Breast epithelium (tissue), 4 donors: ENCODE measurements at regions of chr1 and their contacts with region 1.

Region 1: GRCh38 chr1:201538612-201539551 is at the start of gene NAV1:
- DNase-seq: peak; percentile 43 to 62
- H3K4me3 ChIP-seq: peak within 1 kb of the TSS; percentile 73 to 97 (median 76)
- H3K27ac ChIP-seq: peak within 1 kb of the TSS; percentile 83 to 94
- H3K4me1 ChIP-seq: peaks cover 5 to 18% of the 10 kb centered on the region in 2 donors
- H3K27me3 ChIP-seq: no peaks in the 10 kb centered on the region
- CTCF ChIP-seq: no peak
- POLR2A ChIP-seq: no peak
- total RNA-seq, gene NAV1: 11.3 to 31.5 (median 22.7) TPM

Region 2: DNA sequence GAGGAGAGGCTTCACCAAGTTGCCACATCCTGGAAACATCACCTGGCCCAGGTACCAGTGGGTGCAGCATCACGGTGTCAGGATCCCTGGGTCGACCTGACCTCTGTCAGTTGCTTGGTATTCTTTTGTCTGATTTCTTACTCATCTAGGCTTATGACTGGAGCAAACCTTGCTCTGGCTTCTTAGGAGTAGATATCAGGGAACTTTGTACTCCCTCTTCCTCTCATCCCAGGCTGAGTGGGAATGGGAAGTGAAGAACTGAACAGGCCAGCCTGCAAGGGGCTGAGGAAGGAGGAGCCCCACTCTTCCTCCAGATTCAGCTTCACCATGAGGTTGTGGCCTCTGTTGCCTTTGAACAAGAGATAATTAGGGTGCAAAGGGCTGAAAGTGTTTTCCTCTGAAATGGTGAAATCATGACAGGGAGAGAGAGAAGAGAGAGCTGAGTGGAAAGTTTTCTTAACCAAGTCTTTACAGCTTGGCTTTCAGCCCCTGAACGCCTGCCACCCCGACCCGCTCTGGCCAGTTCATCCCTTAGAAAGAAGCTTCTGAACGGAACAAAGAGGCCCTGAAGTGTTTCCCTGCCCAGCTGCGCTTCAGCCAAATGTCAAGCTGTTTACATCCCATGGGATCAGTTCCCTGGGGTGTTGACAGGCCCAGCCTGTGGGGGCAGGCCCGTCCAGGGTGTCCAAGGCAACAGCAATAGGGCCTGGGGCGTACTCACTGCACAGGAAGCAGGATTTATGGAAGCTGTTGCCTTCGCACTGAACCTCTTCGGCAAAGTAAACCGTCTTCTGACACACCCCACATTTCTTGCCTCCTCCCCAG is 43.2 kb before region 1 on chr1:
- intact Hi-C with region 1: no loop called
- DNase-seq: peak; percentile 92 to 93
- H3K4me3 ChIP-seq: peak overlapping the region in 2 of 3 donors; percentile 32 to 37
- H3K27ac ChIP-seq: peak overlapping the region; percentile 97 to 99
- H3K4me1 ChIP-seq: peaks cover 27 to 65% of the 10 kb centered on the region in 2 donors
- H3K27me3 ChIP-seq: no peaks in the 10 kb centered on the region
- CTCF ChIP-seq: no peak
- POLR2A ChIP-seq: peak; percentile 14

Region 3: DNA sequence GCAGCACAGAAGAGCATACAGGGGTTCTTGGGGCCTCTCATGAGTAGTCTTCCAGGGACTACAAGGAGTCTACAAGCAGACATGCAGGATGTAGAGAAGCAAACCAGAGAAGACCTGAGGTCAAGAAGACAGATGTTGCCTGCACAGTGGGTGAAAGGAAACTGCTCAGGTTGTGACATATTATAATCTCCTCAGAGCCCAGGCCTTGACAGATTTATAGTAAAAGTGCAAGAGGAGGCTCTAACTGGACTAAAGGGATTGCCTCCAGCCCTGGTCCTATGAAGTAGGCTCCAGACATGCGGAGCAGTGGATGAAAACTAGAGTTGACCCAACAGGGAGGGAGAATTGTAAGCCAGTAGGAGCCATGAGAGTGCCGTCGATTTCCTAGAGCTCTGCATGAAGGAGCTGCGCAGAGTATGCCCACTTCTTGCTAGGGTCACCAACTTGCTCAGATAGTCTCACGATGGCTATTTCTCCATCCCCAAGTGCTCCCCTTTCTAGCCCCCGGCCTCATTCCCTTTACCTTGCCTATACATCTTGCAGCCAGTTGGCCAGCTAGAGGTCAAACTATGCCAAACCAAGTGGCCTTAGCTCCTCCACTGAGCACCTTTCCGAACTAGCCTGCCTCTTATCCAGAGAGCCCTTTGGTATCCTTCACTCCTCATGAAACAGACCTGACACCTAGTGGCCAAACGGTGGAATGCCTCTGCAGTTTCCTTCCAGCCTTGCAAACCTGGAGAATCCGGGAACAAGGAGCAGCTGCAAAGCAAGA is 253.8 kb after region 1 on chr1:
- intact Hi-C with region 1: loop called (anchors 5 kb)
- DNase-seq: peak; percentile 76 to 82
- H3K4me3 ChIP-seq: no peak overlapping the region
- H3K27ac ChIP-seq: peak overlapping the region in 1 of 2 donors; percentile 68
- H3K4me1 ChIP-seq: no peaks in the 10 kb centered on the region
- H3K27me3 ChIP-seq: no peaks in the 10 kb centered on the region
- CTCF ChIP-seq: peak; percentile 98 to 99 (median 98)
- POLR2A ChIP-seq: no peak